Right ventricle myocardium superior (tissue), 1 donor: ENCODE measurements at regions of chr6 and their contacts with region 1.

Region 1: DNA sequence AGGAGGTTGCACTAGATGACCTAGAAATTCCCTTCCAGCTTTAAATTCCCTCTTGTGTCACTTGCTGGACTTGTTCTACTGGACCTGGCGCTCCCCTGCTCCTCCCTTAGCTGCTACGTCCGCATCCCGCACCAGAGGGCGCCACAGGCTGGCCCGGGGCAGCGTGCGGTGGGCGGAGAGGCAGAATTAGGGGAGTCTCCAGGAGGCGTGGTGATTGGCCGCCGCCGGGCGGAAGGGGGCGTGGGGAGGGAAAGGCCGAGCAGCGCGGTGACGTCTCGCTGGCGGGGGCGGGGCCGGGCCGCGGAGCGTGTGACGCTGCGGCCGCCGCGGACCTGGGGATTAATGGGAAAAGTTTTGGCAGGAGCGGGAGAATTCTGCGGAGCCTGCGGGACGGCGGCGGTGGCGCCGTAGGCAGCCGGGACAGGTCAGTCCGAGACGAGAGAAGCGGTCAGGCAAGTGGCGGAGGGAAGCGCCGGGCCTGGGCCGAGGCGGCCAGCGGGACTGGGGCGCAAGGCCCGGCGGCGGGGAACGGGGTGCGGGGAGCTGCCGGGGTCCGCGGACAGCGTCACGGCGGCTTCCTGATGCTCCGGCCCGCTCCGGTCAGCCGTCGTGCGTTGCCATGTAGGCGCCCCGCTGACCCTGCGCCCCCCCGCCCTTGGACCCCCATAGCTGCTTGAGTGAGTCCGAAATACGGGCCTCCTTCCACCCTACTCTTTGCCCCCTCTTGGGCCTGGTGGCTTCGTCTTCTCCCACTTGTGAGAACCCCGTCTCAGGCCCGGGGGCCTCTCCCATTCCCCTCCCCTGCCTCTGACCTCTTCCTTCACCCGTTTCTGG is at the start of gene PPARD:
- DNase-seq: peak; percentile 99
- ATAC-seq: peak; percentile 100
- total RNA-seq, gene PPARD: 12.8 TPM

Region 2: GRCh38 chr6:35449287-35449881 is 106.9 kb after region 1 on chr6:
- intact Hi-C with region 1: loop called (anchors 1 kb)
- DNase-seq: no peak
- ATAC-seq: peak; percentile 66